ENCODE measurements at regions of chr12 and their contacts with region 1.

Region 1: DNA sequence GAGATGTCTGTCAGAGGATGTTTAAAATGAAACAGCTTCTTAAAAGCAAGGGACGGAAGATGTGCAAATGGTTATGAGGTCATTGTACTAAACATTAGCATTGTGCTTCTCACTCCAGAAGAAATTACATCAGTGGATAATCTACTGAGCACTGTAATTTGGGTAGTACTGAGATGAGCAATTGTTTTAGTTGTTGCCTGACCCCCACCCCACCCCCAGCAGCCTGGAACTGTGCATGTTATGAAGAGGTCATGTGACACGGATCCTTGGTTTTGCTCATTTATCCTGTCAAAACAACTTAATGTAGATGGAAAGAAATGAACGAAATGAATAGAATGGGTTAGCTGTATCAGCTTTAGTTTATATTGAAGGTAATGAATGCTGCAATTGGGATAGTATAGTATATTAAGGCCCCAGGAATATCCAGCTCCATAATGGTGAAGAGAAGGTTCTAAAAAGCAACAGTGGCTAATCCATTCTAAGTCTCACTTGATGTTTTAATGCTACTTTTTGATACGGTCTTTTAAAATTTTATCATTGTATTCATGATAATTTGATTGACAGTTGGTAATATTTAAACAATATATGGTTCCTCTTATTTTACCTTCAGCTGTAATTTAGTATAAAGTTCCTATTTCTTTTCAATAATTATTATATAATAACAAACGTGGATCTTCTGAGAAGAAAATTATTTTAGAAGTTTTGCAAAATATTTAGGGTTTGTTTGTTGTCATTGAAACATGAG is 58.5 kb downstream of the WNK1 start:
- DNase-seq: peak in 1 of 9 donors; percentile 47
- ATAC-seq: no peak
- H3K4me3 ChIP-seq: no peak overlapping the region
- H3K4me3 Mint-ChIP-seq: peak overlapping the region in 6 of 10 donors; percentile 0 to 49 (median 26)
- H3K27ac ChIP-seq: peak overlapping the region; percentile 25
- H3K27ac Mint-ChIP-seq: peak overlapping the region; percentile 11 to 78 (median 64)
- H3K4me1 ChIP-seq: peaks cover 29 to 50% of the 10 kb centered on the region in 2 donors
- H3K4me1 Mint-ChIP-seq: peaks cover 44 to 84% (median 74%) of the 10 kb centered on the region in 7 donors
- H3K27me3 ChIP-seq: no peaks in the 10 kb centered on the region
- H3K27me3 Mint-ChIP-seq: no peaks in the 10 kb centered on the region

Region 2: DNA sequence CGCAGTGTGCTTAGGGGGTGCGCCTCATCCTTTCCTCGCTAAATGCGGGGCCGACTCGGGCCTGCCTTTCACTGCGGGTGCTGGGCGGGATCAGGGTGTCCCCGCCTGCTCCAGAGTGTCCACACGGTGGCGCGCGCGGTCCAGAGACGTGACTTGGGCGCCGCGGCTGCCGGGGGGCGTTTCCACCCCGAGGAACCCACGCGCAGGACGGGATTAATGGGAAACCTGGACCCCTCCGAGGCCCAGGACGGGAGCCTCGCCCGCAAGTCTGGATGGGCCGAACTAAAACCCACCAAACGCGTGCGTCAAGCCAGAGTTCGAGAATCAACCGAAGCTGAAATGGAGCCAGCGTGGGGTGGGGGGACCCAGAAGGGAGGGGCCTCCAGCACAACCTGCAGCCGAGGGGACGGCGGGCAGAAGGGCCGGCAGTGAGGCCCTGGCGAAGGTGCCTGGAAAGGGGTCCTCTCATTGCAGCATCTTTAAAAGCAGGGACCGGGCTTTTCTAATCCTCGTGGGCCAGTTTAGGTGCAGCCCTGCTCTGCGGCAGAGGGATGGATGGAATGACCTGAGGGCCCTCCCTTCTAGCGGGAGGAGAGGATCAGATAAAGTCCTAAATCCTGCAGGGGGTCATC is 240.9 kb before region 1 on chr12:
- CTCF ChIA-PET with region 1: interaction called, 43 read pairs
- POLR2A ChIA-PET with region 1: interaction called, 3 read pairs
- intact Hi-C with region 1: loop called (anchors 1 kb)
- DNase-seq: peak; percentile 72 to 90 (median 84)
- ATAC-seq: peak; percentile 99
- H3K4me3 ChIP-seq: peak overlapping the region; percentile 78
- H3K4me3 Mint-ChIP-seq: peak overlapping the region; percentile 81 to 92 (median 85)
- H3K27ac ChIP-seq: peak overlapping the region; percentile 69
- H3K27ac Mint-ChIP-seq: peak overlapping the region; percentile 47 to 91 (median 80)
- H3K4me1 ChIP-seq: peaks cover 25 to 47% of the 10 kb centered on the region in 2 donors
- H3K4me1 Mint-ChIP-seq: peaks cover 33 to 58% (median 54%) of the 10 kb centered on the region in 7 donors
- H3K27me3 ChIP-seq: no peaks in the 10 kb centered on the region
- H3K27me3 Mint-ChIP-seq: no peaks in the 10 kb centered on the region

Region 3: DNA sequence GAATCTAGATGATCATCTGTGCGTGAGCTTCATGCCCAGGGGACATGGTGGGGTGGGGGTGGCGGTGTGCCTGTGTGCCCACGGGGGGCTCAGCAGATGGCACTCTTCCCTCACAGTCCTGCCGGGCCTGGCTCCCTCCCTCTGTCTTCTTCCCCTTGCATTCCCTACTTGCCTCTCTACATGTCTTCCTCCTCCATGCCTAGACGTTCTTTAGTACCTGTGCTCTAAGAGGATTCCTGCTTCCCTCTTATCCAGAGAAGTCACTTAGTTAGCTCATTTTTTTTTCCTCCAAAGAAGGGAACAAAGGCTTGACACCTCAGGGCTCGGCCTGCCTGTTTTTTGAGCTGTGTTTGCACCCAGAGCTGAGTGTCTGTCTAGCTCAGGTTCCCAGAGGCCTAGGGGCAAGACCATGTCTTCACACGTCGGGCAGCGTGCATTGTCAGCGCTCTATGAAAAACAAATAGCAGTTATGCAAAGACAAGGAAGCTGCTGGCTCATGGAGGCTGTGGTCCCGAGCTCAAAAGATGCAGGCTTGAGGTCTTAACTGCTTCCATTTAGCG is 196.4 kb before region 1 on chr12:
- CTCF ChIA-PET with region 1: interaction called, 48 read pairs
- POLR2A ChIA-PET with region 1: interaction called, 5 read pairs
- intact Hi-C with region 1: loop called in 1 of 2 experiments (anchors 1 kb)
- DNase-seq: peak in 4 of 9 donors; percentile 16 to 40 (median 32)
- ATAC-seq: peak; percentile 30
- H3K4me3 ChIP-seq: no peak overlapping the region
- H3K4me3 Mint-ChIP-seq: no peak overlapping the region
- H3K27ac ChIP-seq: no peak overlapping the region
- H3K27ac Mint-ChIP-seq: peak overlapping the region in 5 of 9 donors; percentile 30 to 70 (median 51)
- H3K4me1 ChIP-seq: peaks cover 6 to 19% of the 10 kb centered on the region in 2 donors
- H3K4me1 Mint-ChIP-seq: peaks cover 29 to 56% (median 43%) of the 10 kb centered on the region in 7 donors
- H3K27me3 ChIP-seq: no peaks in the 10 kb centered on the region
- H3K27me3 Mint-ChIP-seq: no peaks in the 10 kb centered on the region

Region 4: GRCh38 chr12:642633-643474 is 168.0 kb before region 1 on chr12:
- CTCF ChIA-PET with region 1: interaction called, 3 read pairs
- POLR2A ChIA-PET with region 1: no interaction called
- intact Hi-C with region 1: loop called (anchors 2 kb)
- DNase-seq: peak; percentile 64 to 86 (median 80)
- ATAC-seq: peak; percentile 88
- H3K4me3 ChIP-seq: peak overlapping the region; percentile 54
- H3K4me3 Mint-ChIP-seq: peak overlapping the region; percentile 78 to 92 (median 82)
- H3K27ac ChIP-seq: peak overlapping the region; percentile 91
- H3K27ac Mint-ChIP-seq: peak overlapping the region; percentile 85 to 98 (median 95)
- H3K4me1 ChIP-seq: peaks cover 20 to 30% of the 10 kb centered on the region in 2 donors
- H3K4me1 Mint-ChIP-seq: peaks cover 26 to 72% (median 60%) of the 10 kb centered on the region in 7 donors
- H3K27me3 ChIP-seq: no peaks in the 10 kb centered on the region
- H3K27me3 Mint-ChIP-seq: no peaks in the 10 kb centered on the region

Region 5: DNA sequence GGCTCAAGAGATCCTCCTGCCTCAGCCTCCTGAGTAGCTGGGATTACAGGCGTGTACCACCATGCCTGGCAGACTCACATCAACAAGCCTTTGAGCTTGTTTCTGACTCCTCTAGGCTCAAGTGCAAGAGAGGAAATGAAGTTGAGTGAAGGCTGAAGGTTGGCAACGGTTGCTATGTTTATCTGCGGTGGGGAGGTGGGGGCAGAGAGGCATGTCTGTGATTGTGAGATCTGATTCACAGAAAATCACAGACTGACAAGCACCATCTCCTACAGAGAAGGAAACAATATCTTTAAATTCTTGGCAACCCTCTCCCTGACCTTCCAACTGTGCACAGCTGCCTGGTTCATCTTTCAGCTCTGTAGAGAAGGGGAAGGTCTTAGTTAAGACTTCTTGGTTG is 125.5 kb before region 1 on chr12:
- CTCF ChIA-PET with region 1: no interaction called
- POLR2A ChIA-PET with region 1: interaction called, 5 read pairs
- intact Hi-C with region 1: loop called in 1 of 2 experiments (anchors 1 kb)
- DNase-seq: peak; percentile 48 to 96 (median 94)
- ATAC-seq: peak; percentile 96
- H3K4me3 ChIP-seq: no peak overlapping the region
- H3K4me3 Mint-ChIP-seq: peak overlapping the region; percentile 30 to 78 (median 72)
- H3K27ac ChIP-seq: peak overlapping the region; percentile 81
- H3K27ac Mint-ChIP-seq: peak overlapping the region; percentile 90 to 99 (median 98)
- H3K4me1 ChIP-seq: peaks cover 23 to 31% of the 10 kb centered on the region in 2 donors
- H3K4me1 Mint-ChIP-seq: peaks cover 23 to 53% (median 48%) of the 10 kb centered on the region in 7 donors
- H3K27me3 ChIP-seq: no peaks in the 10 kb centered on the region
- H3K27me3 Mint-ChIP-seq: no peaks in the 10 kb centered on the region

Region 6: GRCh38 chr12:949453-950191 is 138.8 kb after region 1 on chr12 and contains the start of gene RAD52:
- CTCF ChIA-PET with region 1: interaction called, 12 read pairs
- POLR2A ChIA-PET with region 1: no interaction called
- intact Hi-C with region 1: loop called (anchors 1 kb)
- DNase-seq: peak; percentile 94 to 99 (median 97)
- ATAC-seq: peak; percentile 96
- H3K4me3 ChIP-seq: peak within 1 kb of the TSS; percentile 83
- H3K4me3 Mint-ChIP-seq: peak within 1 kb of the TSS; percentile 90 to 98 (median 94)
- H3K27ac ChIP-seq: peak within 1 kb of the TSS; percentile 78
- H3K27ac Mint-ChIP-seq: peak within 1 kb of the TSS; percentile 88 to 98 (median 93)
- H3K4me1 ChIP-seq: peaks cover 0 to 3% of the 10 kb centered on the region in 2 donors
- H3K4me1 Mint-ChIP-seq: peaks cover 20 to 34% (median 30%) of the 10 kb centered on the region in 7 donors
- H3K27me3 ChIP-seq: no peaks in the 10 kb centered on the region
- H3K27me3 Mint-ChIP-seq: peaks cover 0 to 4% (median 0%) of the 10 kb centered on the region in 5 donors
- total RNA-seq, gene RAD52: 11.0 to 34.9 (median 18.3) TPM

Region 7: GRCh38 chr12:1605129-1606020 is 794.5 kb after region 1 on chr12:
- CTCF ChIA-PET with region 1: no interaction called
- POLR2A ChIA-PET with region 1: no interaction called
- intact Hi-C with region 1: loop called in 1 of 2 experiments (anchors 1 kb)
- DNase-seq: peak; percentile 32 to 76 (median 68)
- ATAC-seq: peak; percentile 83
- H3K4me3 ChIP-seq: peak overlapping the region; percentile 55
- H3K4me3 Mint-ChIP-seq: peak overlapping the region; percentile 80 to 94 (median 86)
- H3K27ac ChIP-seq: no peak overlapping the region
- H3K27ac Mint-ChIP-seq: peak overlapping the region in 8 of 9 donors; percentile 27 to 87 (median 56)
- H3K4me1 ChIP-seq: peaks cover 13 to 15% of the 10 kb centered on the region in 2 donors
- H3K4me1 Mint-ChIP-seq: peaks cover 20 to 44% (median 38%) of the 10 kb centered on the region in 7 donors
- H3K27me3 ChIP-seq: no peaks in the 10 kb centered on the region
- H3K27me3 Mint-ChIP-seq: peaks cover 0 to 8% (median 0%) of the 10 kb centered on the region in 5 donors

Measured in naive thymus-derived CD4-positive, alpha-beta T cell (primary cell).